Gastrocnemius medialis (tissue), 4 donors: ENCODE measurements at regions of chrX and their contacts with region 1.

Region 1: DNA sequence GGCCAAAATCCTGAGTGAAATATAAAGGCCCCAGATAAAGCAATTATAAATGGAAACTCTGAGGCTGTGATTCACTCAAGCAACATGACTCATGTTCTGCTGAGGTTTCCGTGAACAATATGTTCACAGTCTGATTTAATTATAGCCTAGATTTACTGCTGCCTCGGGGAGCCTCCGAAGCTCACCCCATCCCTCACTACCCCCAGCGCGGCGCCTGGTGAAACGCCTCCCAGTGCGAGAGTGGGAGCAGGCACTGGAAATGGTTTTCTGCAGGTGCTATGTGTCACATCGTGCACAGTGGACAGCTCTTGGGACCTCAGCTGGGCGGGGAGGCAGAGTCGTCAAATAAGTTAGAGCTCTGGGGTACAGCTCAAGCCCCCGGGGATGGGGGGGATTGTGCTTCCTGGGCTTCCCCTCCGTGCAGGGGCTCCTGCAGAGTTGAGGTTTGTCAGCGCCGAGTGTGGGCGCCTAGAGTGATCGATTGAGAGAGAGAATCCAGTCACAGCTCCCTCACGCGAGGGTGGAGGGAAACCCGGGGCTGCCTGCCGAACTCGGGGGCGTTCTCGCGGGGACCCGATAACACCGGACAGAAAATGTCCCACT is 110.6 kb downstream of the PHKA2 start:
- DNase-seq: peak in 1 of 2 donors; percentile 36
- ATAC-seq: peak; percentile 98 to 99
- H3K4me3 ChIP-seq: no peak overlapping the region
- H3K27ac ChIP-seq: peak overlapping the region; percentile 78 to 85 (median 79)
- H3K4me1 ChIP-seq: peaks cover 15 to 17% of the 10 kb centered on the region in 2 donors
- H3K27me3 ChIP-seq: no peaks in the 10 kb centered on the region
- CTCF ChIP-seq: no peak
- POLR2A ChIP-seq: no peak

Region 2: GRCh38 chrX:18833071-18833731 is 40.1 kb before region 1 on chrX:
- in situ Hi-C with region 1: no loop called
- intact Hi-C with region 1: loop called (anchors 5 kb)
- DNase-seq: peak; percentile 64 to 82
- ATAC-seq: peak; percentile 98 to 99
- H3K4me3 ChIP-seq: peak overlapping the region; percentile 39 to 50 (median 47)
- H3K27ac ChIP-seq: peak overlapping the region; percentile 80 to 89 (median 86)
- H3K4me1 ChIP-seq: peaks cover 0 to 3% of the 10 kb centered on the region in 2 donors
- H3K27me3 ChIP-seq: no peaks in the 10 kb centered on the region
- CTCF ChIP-seq: no peak
- POLR2A ChIP-seq: peak; percentile 54 to 63

Region 3: DNA sequence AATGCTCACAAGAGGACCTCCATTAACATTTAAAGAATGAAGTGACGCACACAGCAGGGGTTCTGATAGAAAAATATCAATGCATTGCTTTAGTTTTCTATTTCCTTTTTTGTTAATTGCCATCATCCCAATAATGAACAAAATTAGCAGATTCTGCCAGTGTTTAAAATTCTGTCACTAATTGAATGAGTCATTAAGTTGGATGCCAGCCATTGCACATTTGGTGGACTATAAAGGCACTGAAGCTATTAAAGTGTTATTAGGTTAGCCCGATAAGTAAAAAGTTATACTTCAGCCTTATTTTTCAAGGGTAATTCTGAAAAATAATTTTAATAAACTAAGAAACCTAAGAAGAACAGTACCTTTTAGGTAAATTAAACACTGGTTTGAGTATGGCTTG is 588.9 kb after region 1 on chrX:
- in situ Hi-C with region 1: no loop called
- intact Hi-C with region 1: no loop called
- DNase-seq: no peak
- ATAC-seq: no peak
- H3K4me3 ChIP-seq: no peak overlapping the region
- H3K27ac ChIP-seq: no peak overlapping the region
- H3K4me1 ChIP-seq: no peaks in the 10 kb centered on the region
- H3K27me3 ChIP-seq: no peaks in the 10 kb centered on the region
- CTCF ChIP-seq: no peak
- POLR2A ChIP-seq: no peak